Uterus (tissue), 4 donors: ENCODE measurements at regions of chr3 and their contacts with region 1.

Region 1: GRCh38 chr3:129316131-129317013 is 37.7 kb downstream of the HMCES start:
- DNase-seq: peak; percentile 87 to 88
- H3K4me3 ChIP-seq: peak overlapping the region; percentile 65 to 73
- H3K27ac ChIP-seq: peak overlapping the region; percentile 93 to 95
- H3K4me1 ChIP-seq: peaks cover 0 to 4% of the 10 kb centered on the region in 2 donors
- H3K27me3 ChIP-seq: no peaks in the 10 kb centered on the region
- CTCF ChIP-seq: peak; percentile 54 to 65 (median 61)
- POLR2A ChIP-seq: peak; percentile 91 to 99

Region 2: DNA sequence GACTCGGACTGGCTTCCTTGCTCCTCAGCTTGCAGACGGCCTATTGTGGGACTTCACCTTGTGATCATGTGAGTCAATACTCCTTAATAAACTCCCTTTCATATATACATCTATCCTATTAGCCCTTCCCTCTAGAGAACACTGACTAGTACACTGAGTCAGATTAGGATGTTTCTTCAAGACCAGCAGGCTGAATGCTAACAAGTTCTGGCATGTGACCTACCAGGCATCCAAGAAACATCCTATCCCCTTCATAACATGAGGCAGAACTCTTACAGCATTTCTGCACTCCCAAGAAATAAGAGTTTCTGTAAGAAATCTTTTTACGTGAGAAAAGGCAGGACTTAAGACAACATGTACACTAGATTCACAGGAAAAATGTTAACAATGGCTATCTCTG is 331.8 kb before region 1 on chr3:
- intact Hi-C with region 1: no loop called
- DNase-seq: no peak
- H3K4me3 ChIP-seq: no peak overlapping the region
- H3K27ac ChIP-seq: no peak overlapping the region
- H3K4me1 ChIP-seq: no peaks in the 10 kb centered on the region
- H3K27me3 ChIP-seq: no peaks in the 10 kb centered on the region
- CTCF ChIP-seq: no peak
- POLR2A ChIP-seq: no peak

Region 3: GRCh38 chr3:129278439-129278970 is 37.9 kb before region 1 on chr3 and contains the start of gene HMCES:
- intact Hi-C with region 1: loop called (anchors 5 kb)
- DNase-seq: peak; percentile 90 to 93
- H3K4me3 ChIP-seq: peak within 1 kb of the TSS; percentile 66 to 96
- H3K27ac ChIP-seq: peak within 1 kb of the TSS; percentile 87 to 96
- H3K4me1 ChIP-seq: peaks cover 0 to 9% of the 10 kb centered on the region in 2 donors
- H3K27me3 ChIP-seq: no peaks in the 10 kb centered on the region
- CTCF ChIP-seq: peak in 1 of 4 experiments; percentile 26
- POLR2A ChIP-seq: peak; percentile 82 to 87
- total RNA-seq, gene HMCES: 2.0 to 42.9 (median 28.3) TPM